Heart right ventricle (tissue), 16 donors: ENCODE measurements at regions of chr22 and their contacts with region 1.

Region 1: DNA sequence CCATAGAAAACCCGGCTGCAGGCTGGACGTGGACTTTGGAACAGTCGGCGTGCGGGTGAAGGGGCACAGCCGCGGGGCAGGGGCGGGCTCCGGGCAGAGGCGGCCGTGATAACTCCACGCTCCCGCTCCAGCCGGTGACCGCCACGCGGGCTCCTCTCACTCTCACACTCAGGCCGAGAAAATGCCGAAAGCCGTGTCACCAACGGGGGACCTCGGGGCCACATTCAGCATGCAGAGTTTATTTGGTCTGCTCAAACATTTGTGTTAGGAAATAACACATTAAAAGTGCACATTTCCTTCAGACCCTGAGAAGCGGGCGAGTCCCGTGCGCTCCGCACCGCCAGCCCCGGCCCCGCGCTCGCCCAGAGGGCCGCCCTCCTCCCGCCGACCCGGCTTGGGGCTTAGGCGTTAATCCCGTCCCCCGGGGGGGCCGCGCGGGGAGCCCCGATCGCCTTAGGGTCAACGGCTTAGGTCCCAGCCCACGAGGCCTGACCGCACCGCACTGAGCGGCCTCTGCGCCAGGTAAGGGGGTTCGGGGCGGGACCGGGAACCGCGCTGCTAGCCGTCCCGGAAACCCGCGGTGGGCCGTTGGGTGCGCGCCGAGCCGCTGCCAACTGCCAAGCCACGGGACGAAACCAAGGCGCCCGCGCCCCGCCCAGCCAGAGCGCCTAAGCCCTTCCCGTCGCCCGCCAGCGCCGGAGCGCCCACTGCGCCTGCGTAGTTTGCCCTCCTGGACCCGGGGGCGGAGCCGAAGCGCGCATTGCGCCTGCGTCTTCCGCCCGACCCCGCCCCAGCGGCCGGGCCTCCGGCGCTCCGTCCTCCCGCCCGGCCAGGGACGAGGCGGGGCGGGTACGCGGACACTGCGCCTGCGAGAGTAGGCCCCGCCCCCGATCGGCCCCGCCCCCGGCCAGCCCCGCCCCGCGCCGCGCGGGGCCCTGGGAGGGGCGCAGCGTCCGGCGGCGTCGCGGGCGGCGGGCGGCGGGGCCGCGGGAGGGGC is at the start of gene ZBED4:
- DNase-seq: peak; percentile 95 to 100
- ATAC-seq: peak; percentile 94 to 97 (median 96)
- H3K4me3 ChIP-seq: peak within 1 kb of the TSS; percentile 63 to 90 (median 78)
- H3K27ac ChIP-seq: peak within 1 kb of the TSS; percentile 59 to 97 (median 95)
- H3K4me1 ChIP-seq: peaks cover 19 to 45% (median 42%) of the 10 kb centered on the region in 9 donors
- H3K27me3 ChIP-seq: peaks cover 21 to 27% (median 26%) of the 10 kb centered on the region in 7 donors
- CTCF ChIP-seq: no peak
- total RNA-seq, gene ZBED4: 3.5 to 5.9 (median 4.4) TPM

Region 2: DNA sequence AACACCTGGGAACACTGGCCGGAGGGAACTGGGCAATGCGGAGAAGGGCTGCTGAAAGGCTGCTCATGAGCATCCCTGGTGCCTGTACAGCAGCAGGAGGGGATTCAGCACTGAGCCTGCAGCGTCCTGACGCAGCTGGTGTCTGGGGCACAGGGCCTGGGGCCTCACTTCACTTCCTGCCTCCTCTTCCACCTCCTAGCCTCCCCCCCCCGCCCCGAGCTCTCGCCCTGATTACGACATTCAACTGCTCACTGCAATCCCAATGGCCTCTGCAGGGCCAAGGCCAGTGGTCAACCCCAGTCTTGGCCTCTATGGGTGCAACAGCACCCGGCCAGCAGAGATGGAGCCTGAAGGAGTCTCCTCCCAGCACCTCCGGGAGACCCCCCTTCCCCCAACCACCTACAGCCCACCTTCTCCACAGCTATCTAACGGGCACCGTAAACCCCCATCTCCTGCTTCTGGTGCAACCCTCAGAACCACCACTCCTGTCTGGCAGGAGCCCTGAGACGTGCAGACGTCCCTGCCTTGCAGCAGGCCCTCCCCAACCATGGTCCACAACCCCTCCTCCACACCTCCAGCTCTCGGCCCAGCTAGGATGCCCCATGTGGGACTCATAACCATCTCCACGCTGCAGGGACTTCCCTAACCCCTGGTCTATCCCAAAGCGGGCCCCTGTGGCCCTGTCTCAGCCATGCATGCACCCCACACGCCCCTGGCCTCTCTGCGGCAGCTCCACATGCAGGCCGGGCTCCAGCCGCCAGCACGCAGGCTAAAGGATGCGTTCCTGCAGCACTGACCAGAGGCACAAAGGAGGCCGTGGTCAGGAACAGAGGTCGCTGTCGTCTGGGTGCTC is 63.7 kb before region 1 on chr22:
- intact Hi-C with region 1: loop called in 2 of 10 experiments (anchors 10 kb)
- DNase-seq: peak in 1 of 2 donors; percentile 56
- ATAC-seq: peak; percentile 18 to 71 (median 50)
- H3K4me3 ChIP-seq: peak overlapping the region in 5 of 10 donors; percentile 4 to 31 (median 13)
- H3K27ac ChIP-seq: peak overlapping the region; percentile 30 to 85 (median 75)
- H3K4me1 ChIP-seq: peaks cover 28 to 82% (median 71%) of the 10 kb centered on the region in 9 donors
- H3K27me3 ChIP-seq: no peaks in the 10 kb centered on the region
- CTCF ChIP-seq: no peak

Region 3: GRCh38 chr22:49812838-49813237 is 40.4 kb before region 1 on chr22:
- intact Hi-C with region 1: no loop called
- DNase-seq: no peak
- ATAC-seq: peak in 1 of 8 donors; percentile 48
- H3K4me3 ChIP-seq: no peak overlapping the region
- H3K27ac ChIP-seq: no peak overlapping the region
- H3K4me1 ChIP-seq: peaks cover 5 to 69% (median 45%) of the 10 kb centered on the region in 9 donors
- H3K27me3 ChIP-seq: no peaks in the 10 kb centered on the region
- CTCF ChIP-seq: no peak

Region 4: DNA sequence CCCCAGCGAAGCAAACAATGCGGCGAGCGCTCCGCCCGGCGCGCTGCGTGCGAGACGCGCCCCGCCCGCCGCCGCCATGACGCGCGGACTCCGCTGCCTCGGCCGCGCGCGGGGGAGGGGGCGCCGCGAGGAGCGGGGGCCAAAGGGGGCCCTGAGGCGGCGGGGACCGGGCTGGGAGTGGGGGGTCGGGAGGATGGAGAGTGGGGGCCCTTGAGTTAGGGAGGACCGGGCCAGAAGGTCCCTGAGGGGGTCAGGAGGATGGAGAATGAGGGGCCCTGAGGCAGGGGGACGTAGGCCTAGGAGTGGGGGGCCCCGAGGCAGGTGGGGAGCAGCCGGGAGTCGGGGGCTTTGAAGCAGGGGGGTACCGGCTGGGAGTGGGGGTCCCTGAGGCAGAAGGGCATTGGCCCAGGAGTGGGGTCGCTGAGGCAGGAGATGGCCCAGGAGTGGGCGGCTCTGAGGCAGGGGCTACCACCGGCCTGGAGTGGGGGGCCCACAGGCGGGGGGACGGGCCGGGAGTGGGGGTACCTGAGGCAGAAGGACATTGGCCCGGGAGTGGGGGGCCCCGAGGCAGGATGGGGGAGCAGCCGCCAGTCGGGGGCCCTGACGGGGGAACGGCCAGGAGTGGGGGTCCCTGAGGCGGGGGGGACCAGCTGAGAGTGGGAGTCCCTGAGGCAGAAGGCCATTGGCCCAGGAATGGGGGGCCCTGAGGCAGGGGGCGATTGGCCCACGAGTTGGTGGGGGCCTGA is 25.2 kb before region 1 on chr22 and contains the start of gene BRD1:
- intact Hi-C with region 1: loop called in 1 of 10 experiments (anchors 2 kb)
- DNase-seq: peak; percentile 36 to 73
- ATAC-seq: peak; percentile 54 to 85 (median 74)
- H3K4me3 ChIP-seq: peak within 1 kb of the TSS; percentile 42 to 90 (median 78)
- H3K27ac ChIP-seq: peak within 1 kb of the TSS; percentile 24 to 91 (median 86)
- H3K4me1 ChIP-seq: peaks cover 8 to 37% (median 26%) of the 10 kb centered on the region in 9 donors
- H3K27me3 ChIP-seq: no peaks in the 10 kb centered on the region
- CTCF ChIP-seq: no peak
- total RNA-seq, gene BRD1: 14.6 to 23.2 (median 16.9) TPM